B cell (primary cell): ENCODE measurements at regions of chr10 and their contacts with region 1.

Region 1: GRCh38 chr10:97334370-97335175 is at the start of gene FRAT2:
- DNase-seq: peak; percentile 98
- ATAC-seq: peak; percentile 90
- H3K4me3 ChIP-seq: peak within 1 kb of the TSS; percentile 60 to 86 (median 75)
- H3K4me3 Mint-ChIP-seq: peak within 1 kb of the TSS; percentile 88
- H3K27ac ChIP-seq: peak within 1 kb of the TSS; percentile 93 to 100
- H3K27ac Mint-ChIP-seq: peak within 1 kb of the TSS; percentile 98
- H3K4me1 ChIP-seq: peaks cover 29 to 30% of the 10 kb centered on the region in 2 donors
- H3K4me1 Mint-ChIP-seq: peaks cover 33% of the 10 kb centered on the region
- H3K27me3 ChIP-seq: no peaks in the 10 kb centered on the region
- H3K27me3 Mint-ChIP-seq: no peaks in the 10 kb centered on the region
- CTCF ChIP-seq: no peak
- total RNA-seq, gene FRAT2: 30.2 and 31.5 TPM in 2 replicates

Region 2: DNA sequence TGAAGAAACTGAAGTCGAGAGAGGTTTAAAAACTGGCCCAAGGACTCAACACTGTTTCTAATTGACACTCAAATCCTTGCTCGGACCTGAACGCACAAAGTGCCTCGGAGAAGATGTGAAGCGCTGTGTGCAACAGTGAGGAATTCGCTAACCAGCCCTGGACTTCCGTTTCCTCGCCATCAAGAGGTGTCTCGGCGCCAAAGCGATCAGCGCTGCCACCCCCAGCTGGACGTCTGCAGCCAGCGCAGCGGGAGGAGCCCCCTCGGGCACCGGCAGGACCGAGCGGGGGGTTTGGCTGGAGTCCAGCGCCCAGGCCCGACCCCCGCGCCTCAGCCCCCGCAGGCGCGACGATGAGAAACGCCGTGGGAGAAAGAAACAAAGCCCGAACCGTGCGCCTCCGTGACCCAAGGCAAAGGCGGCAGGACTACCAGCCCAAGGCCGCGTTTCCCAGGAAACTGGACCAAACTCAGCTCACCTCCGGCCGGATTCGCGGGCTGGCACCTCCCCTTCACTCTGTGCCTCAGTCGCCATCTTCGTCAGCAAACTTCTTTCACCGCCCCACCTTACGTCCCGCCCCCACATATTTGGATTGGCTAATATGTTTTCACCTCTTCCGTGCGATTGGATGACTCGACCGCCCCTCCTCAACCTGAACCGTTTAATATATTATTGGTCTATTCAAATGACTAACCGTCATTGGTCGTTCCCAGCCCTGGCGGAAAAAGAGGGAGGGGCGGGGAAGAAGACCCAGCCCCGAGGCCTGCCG is 42.3 kb before region 1 on chr10 and contains the start of gene ARHGAP19:
- CTCF ChIA-PET with region 1: interaction called, 3 read pairs
- POLR2A ChIA-PET with region 1: interaction called, 6 read pairs
- intact Hi-C with region 1: loop called (anchors 1 kb)
- DNase-seq: peak; percentile 96
- ATAC-seq: peak; percentile 98
- H3K4me3 ChIP-seq: peak within 1 kb of the TSS; percentile 63 to 98 (median 91)
- H3K4me3 Mint-ChIP-seq: peak within 1 kb of the TSS; percentile 90
- H3K27ac ChIP-seq: peak within 1 kb of the TSS; percentile 48 to 85
- H3K27ac Mint-ChIP-seq: peak within 1 kb of the TSS; percentile 86
- H3K4me1 ChIP-seq: peaks cover 6 to 12% of the 10 kb centered on the region in 2 donors
- H3K4me1 Mint-ChIP-seq: peaks cover 16% of the 10 kb centered on the region
- H3K27me3 ChIP-seq: no peaks in the 10 kb centered on the region
- H3K27me3 Mint-ChIP-seq: no peaks in the 10 kb centered on the region
- CTCF ChIP-seq: no peak
- total RNA-seq, gene ARHGAP19: 21.7 and 22.5 TPM in 2 replicates

Region 3: DNA sequence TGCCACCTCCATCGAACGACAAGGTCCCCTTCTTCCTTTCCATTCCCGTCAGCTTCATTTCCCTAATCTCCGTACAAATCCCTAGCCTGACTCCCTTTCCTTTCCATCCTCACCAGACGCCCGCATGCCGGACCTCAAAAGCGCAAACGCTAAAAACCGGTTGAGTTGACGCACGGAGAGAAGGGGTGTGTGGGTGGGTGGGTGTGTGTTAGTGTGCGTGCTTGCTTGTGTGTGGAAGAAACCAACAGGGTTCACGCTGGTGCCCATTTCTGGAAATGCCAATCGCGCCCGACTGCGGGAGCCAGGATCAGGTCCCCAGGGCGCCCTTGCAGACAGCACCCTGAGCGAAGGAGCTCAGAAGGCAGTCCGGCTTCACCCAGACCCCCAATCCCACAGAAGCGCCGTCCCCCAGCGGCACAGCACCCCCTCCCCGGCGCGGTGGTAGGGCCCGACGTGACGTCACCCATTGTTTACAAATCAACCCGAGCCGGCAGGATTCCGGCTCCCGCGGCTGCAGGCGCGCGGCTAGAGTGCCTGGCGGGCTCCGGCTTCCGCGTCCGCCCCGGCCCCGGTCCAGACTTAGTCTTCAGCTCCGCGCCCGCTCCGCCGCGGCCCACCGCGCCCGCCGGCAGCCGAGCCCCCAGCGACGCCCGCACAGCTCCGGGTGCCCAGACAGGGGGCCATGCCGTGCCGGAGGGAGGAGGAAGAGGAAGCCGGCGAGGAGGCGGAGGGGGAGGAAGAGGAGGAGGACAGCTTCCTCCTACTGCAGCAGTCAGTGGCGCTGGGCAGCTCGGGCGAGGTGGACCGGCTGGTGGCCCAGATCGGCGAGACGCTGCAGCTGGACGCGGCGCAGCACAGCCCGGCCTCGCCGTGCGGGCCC is 15.6 kb before region 1 on chr10 and contains the start of gene FRAT1:
- CTCF ChIA-PET with region 1: interaction called, 31 read pairs
- POLR2A ChIA-PET with region 1: interaction called, 32 read pairs
- intact Hi-C with region 1: loop called (anchors 1 kb)
- DNase-seq: peak; percentile 98
- ATAC-seq: peak; percentile 68
- H3K4me3 ChIP-seq: peak within 1 kb of the TSS; percentile 57 to 86 (median 79)
- H3K4me3 Mint-ChIP-seq: peak within 1 kb of the TSS; percentile 98
- H3K27ac ChIP-seq: peak within 1 kb of the TSS; percentile 97 to 100
- H3K27ac Mint-ChIP-seq: peak within 1 kb of the TSS; percentile 100
- H3K4me1 ChIP-seq: peaks cover 18 to 28% of the 10 kb centered on the region in 2 donors
- H3K4me1 Mint-ChIP-seq: peaks cover 33% of the 10 kb centered on the region
- H3K27me3 ChIP-seq: no peaks in the 10 kb centered on the region
- H3K27me3 Mint-ChIP-seq: no peaks in the 10 kb centered on the region
- CTCF ChIP-seq: no peak
- total RNA-seq, gene FRAT1: 25.3 and 27.8 TPM in 2 replicates